Activated CD4-positive, alpha-beta T cell treated with anti-CD3 and anti-CD28 coated beads, Interleukin-2, amount 10 ng/mL, durations not matched to agents 7 days and 5 days (primary cell): ENCODE measurements at regions of chr16 and their contacts with region 1.

Region 1: DNA sequence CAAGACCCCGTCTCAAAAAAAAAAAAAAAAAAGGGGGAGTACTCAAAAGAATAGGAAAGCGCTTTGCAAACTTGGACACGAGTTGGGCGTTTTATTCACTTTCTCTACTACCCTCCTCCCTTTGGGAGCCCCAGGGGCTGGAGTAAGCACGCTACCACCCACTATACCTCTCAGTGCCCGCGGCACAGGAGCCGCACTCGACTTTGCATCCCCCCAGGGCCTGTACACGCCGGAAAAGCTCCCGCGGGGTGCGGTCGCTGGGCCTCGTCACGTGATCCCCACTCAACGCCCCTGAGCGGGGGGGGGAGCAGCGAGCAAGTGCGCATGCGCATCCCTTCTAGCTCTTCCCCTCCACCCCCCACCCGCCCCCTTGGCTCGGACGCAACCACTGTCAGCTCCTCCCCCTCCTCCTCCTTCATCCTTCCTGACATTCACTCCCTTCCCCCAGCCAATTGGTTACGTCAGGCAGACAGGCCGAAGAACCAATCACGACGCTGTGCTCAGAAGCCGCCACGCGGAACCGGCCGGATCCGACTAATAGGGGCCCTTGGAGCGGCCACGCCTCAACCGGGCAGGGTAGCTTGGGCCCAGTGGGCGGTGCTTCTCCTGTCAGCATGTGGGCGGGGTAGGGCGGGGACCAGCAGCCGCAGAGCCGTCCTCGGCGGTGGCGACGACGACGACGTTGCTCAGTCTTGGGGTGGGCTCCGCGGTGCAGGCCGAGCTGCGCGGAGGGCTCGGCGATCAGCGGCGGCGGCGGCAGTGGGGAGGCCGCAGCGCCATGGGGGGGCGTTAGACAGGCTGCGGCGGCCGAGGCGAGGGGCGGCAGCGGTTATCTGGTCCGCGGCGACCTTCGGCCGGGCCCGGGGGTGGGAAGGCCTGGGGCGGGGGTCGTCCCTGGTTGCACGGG is at the start of gene HAPSTR1:
- DNase-seq: peak; percentile 100
- H3K4me3 Mint-ChIP-seq: peak within 1 kb of the TSS; percentile 95
- H3K27ac Mint-ChIP-seq: peak within 1 kb of the TSS; percentile 100
- H3K4me1 Mint-ChIP-seq: peaks cover 30% of the 10 kb centered on the region
- H3K27me3 Mint-ChIP-seq: no peaks in the 10 kb centered on the region
- total RNA-seq, gene HAPSTR1: 55.0 to 55.6 TPM

Region 2: GRCh38 chr16:8936421-8936820 is 154.8 kb before region 1 on chr16:
- CTCF ChIA-PET with region 1: no interaction called
- POLR2A ChIA-PET with region 1: interaction called, 10 read pairs
- DNase-seq: peak; percentile 82
- H3K4me3 Mint-ChIP-seq: no peak overlapping the region
- H3K27ac Mint-ChIP-seq: peak overlapping the region; percentile 2
- H3K4me1 Mint-ChIP-seq: peaks cover 52% of the 10 kb centered on the region
- H3K27me3 Mint-ChIP-seq: no peaks in the 10 kb centered on the region

Region 3: DNA sequence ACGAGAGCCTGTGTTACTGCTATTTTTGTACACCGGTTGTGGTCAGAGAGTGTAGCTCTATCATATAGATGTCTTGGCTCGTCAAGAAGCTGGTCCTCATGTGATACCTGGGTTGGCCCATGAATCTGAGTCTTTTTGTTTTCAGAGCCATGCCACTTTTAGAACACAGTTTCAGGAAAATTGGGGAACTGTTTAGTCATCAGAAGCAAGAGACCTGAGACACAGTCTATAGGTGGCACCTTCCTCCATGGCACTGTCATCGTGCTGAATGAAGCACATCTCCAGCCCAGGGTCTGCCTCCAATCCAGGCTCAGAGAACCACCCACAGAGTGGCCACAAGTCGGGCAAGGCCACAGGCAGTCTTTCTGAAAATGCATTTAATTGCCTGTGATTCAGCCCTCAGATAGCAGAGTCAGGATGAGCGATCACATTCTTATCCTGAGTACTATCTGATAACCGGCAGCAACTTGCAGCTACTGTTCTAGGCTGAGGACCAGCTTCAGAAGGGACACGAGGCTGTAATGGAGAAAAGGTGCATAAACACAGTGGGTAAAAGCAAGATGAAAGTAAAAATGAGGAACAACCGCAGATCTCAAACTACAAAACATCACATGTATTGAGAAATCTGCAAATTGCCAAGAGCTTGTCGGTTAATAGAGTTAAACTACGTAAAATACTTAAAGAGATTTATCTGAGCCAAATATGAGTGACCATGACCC is 14.0 kb before region 1 on chr16:
- CTCF ChIA-PET with region 1: interaction called, 11 read pairs
- POLR2A ChIA-PET with region 1: interaction called, 9 read pairs
- DNase-seq: no peak
- H3K4me3 Mint-ChIP-seq: no peak overlapping the region
- H3K27ac Mint-ChIP-seq: peak overlapping the region; percentile 80
- H3K4me1 Mint-ChIP-seq: peaks cover 46% of the 10 kb centered on the region
- H3K27me3 Mint-ChIP-seq: no peaks in the 10 kb centered on the region

Region 4: DNA sequence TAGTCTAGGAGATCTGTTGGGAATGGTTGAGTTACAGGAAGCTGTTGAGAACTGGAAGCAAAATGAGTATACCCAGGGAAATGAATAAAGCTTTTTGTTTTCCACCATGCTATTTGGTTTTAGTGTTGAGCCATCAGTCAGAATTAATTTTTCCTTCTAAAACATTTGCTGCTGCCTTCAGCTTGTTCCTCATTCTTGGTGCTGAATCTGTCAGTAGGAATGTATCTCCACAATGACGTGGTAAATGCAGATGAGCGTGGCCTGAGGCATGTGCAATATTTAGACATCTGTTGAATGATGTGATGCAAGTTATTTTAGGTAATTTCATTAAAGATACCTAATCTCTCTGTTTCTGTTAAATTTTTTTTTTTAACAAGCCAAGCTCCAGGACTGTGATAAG is 11.2 kb after region 1 on chr16:
- CTCF ChIA-PET with region 1: interaction called, 11 read pairs
- POLR2A ChIA-PET with region 1: interaction called, 4 read pairs
- DNase-seq: no peak
- H3K4me3 Mint-ChIP-seq: peak overlapping the region; percentile 1
- H3K27ac Mint-ChIP-seq: peak overlapping the region; percentile 9
- H3K4me1 Mint-ChIP-seq: peaks cover 87% of the 10 kb centered on the region
- H3K27me3 Mint-ChIP-seq: no peaks in the 10 kb centered on the region

Region 5: GRCh38 chr16:9134739-9135138 is 43.5 kb after region 1 on chr16:
- CTCF ChIA-PET with region 1: no interaction called
- POLR2A ChIA-PET with region 1: no interaction called
- DNase-seq: peak; percentile 60
- H3K4me3 Mint-ChIP-seq: no peak overlapping the region
- H3K27ac Mint-ChIP-seq: no peak overlapping the region
- H3K4me1 Mint-ChIP-seq: peaks cover 24% of the 10 kb centered on the region
- H3K27me3 Mint-ChIP-seq: peaks cover 2% of the 10 kb centered on the region

Region 6: GRCh38 chr16:9258423-9259051 is 167.3 kb after region 1 on chr16:
- CTCF ChIA-PET with region 1: no interaction called
- POLR2A ChIA-PET with region 1: no interaction called
- DNase-seq: peak; percentile 44
- H3K4me3 Mint-ChIP-seq: no peak overlapping the region
- H3K27ac Mint-ChIP-seq: no peak overlapping the region
- H3K4me1 Mint-ChIP-seq: no peaks in the 10 kb centered on the region
- H3K27me3 Mint-ChIP-seq: peaks cover 2% of the 10 kb centered on the region